ENCODE measurements at regions of chr1 and their contacts with region 1.

Region 1: DNA sequence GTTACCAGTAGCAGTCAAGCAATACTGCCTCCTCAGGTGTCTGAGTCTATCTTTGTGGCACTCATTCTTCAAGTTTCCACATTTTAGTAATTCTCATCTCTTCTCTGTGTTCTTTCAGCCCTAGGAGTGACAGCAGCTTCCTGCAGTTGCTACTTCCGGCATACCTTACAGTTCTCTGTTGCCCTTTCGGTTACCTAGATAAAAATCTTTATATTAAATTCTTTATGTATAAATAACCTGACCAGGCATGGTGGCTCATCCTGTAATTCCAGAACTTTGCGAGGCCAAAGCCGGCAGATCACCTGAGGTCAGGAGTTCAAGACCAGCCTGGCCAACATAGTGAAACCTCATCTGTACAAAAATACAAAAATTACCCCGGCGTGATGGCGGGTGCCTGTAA is 62.9 kb downstream of the CDKN2C start:
- DNase-seq: no peak
- ATAC-seq: no peak
- H3K4me3 ChIP-seq: no peak overlapping the region
- H3K4me3 Mint-ChIP-seq: no peak overlapping the region
- H3K27ac ChIP-seq: no peak overlapping the region
- H3K27ac Mint-ChIP-seq: no peak overlapping the region
- H3K4me1 ChIP-seq: no peaks in the 10 kb centered on the region
- H3K4me1 Mint-ChIP-seq: no peaks in the 10 kb centered on the region
- H3K27me3 ChIP-seq: peaks cover 0 to 11% of the 10 kb centered on the region in 2 experiments
- H3K27me3 Mint-ChIP-seq: peaks cover 4% of the 10 kb centered on the region in 2 donors

Region 2: DNA sequence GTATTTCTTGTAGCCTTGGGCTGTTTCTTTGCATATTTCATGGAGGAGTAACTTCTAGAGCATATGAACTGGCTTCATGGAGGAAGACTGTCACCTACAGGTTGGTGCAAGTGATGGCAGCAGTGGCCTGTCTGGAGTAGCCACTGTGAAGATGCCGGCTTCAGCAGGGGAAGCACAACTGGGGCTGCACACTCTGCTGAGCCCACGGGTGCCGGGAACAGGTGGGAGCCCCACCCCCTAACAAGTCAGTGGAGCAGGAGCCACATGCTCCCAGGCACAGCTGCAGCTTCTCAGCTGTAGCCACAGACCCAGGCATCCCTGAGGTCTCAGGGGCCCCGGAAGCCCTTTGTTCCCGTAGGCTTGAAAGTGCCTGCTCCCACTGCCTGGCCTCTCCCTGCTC is 26.0 kb after region 1 on chr1:
- CTCF ChIA-PET with region 1: no interaction called
- POLR2A ChIA-PET with region 1: interaction called in 1 of 2 experiments, 10 read pairs
- DNase-seq: peak in 3 of 35 experiments; percentile 1 to 44 (median 1)
- ATAC-seq: no peak
- H3K4me3 ChIP-seq: no peak overlapping the region
- H3K4me3 Mint-ChIP-seq: no peak overlapping the region
- H3K27ac ChIP-seq: no peak overlapping the region
- H3K27ac Mint-ChIP-seq: no peak overlapping the region
- H3K4me1 ChIP-seq: no peaks in the 10 kb centered on the region
- H3K4me1 Mint-ChIP-seq: no peaks in the 10 kb centered on the region
- H3K27me3 ChIP-seq: peaks cover 0 to 16% of the 10 kb centered on the region in 2 experiments
- H3K27me3 Mint-ChIP-seq: peaks cover 12 to 16% of the 10 kb centered on the region in 2 donors